ENCODE measurements at regions of chr9 and their contacts with region 1.

Region 1: GRCh38 chr9:92438900-92439526 is 14.7 kb upstream of the OMD start:
- DNase-seq: peak; percentile 9
- H3K4me3 Mint-ChIP-seq: no peak overlapping the region
- H3K27ac Mint-ChIP-seq: peak overlapping the region; percentile 68
- H3K4me1 Mint-ChIP-seq: peaks cover 7% of the 10 kb centered on the region
- H3K27me3 Mint-ChIP-seq: no peaks in the 10 kb centered on the region
- CTCF ChIP-seq: peak; percentile 50

Region 2: DNA sequence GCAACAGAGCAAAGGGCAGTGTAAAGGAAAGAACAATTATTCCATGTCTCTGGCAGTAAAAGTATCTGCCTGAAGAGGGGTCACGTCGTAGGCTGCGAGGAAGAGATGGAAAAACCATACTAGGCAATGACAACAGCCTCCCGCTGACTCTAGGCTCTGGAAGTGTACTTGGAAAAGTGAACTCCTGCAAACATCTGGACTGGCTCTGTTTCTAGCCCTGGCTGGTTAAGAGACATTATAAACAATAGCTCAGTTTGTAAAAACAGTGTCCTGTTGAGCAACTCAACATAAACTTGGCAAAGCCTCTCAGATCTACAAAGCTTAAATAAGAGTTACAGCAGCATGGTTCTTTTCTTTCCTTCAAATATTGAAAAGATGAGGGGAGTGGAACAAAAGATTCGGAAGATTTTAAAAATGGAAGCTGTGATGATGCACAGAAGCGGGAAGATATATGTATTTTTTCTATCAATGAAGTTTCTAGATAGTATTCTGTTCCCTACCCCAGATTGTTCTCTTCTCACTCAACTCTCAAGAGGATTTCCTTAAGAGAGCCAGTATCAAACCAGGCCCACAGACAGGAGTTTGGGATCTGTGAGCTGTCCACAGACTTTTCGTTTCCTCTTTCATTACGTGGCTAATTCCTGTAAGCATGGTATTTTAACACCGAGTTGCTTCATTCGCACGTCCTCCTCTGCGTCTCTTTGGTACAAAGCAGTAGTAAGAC is 403.2 kb before region 1 on chr9:
- CTCF ChIA-PET with region 1: no interaction called
- POLR2A ChIA-PET with region 1: no interaction called
- intact Hi-C with region 1: no loop called
- DNase-seq: no peak
- H3K4me3 Mint-ChIP-seq: no peak overlapping the region
- H3K27ac Mint-ChIP-seq: peak overlapping the region; percentile 56
- H3K4me1 Mint-ChIP-seq: no peaks in the 10 kb centered on the region
- H3K27me3 Mint-ChIP-seq: no peaks in the 10 kb centered on the region
- CTCF ChIP-seq: no peak

Region 3: DNA sequence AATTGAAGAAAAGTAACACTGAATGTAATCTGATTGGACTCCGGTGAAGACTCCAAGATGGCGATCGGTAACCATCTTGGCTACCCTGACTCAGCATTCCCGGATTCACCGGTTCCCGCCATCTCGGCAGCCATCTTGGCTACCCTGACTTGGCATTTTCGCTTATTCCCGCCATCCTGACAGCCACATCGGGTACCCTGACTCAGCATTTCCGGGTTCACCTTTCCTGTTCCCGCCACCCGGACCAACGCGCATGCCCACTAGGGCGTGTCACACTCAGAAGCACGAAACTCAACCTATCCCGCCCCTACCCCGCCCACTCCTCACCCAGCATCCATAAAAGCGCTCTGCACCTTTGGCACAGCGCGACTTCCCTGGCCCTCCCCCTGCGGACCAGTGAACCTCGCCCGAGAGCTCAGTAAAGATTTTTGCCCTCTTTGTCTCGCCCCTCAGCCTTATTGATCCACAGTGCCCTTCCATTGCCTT is 341.0 kb before region 1 on chr9:
- CTCF ChIA-PET with region 1: no interaction called
- POLR2A ChIA-PET with region 1: no interaction called
- intact Hi-C with region 1: no loop called
- DNase-seq: peak; percentile 89
- H3K4me3 Mint-ChIP-seq: peak overlapping the region; percentile 24
- H3K27ac Mint-ChIP-seq: no peak overlapping the region
- H3K4me1 Mint-ChIP-seq: peaks cover 26% of the 10 kb centered on the region
- H3K27me3 Mint-ChIP-seq: no peaks in the 10 kb centered on the region
- CTCF ChIP-seq: no peak

Region 4: DNA sequence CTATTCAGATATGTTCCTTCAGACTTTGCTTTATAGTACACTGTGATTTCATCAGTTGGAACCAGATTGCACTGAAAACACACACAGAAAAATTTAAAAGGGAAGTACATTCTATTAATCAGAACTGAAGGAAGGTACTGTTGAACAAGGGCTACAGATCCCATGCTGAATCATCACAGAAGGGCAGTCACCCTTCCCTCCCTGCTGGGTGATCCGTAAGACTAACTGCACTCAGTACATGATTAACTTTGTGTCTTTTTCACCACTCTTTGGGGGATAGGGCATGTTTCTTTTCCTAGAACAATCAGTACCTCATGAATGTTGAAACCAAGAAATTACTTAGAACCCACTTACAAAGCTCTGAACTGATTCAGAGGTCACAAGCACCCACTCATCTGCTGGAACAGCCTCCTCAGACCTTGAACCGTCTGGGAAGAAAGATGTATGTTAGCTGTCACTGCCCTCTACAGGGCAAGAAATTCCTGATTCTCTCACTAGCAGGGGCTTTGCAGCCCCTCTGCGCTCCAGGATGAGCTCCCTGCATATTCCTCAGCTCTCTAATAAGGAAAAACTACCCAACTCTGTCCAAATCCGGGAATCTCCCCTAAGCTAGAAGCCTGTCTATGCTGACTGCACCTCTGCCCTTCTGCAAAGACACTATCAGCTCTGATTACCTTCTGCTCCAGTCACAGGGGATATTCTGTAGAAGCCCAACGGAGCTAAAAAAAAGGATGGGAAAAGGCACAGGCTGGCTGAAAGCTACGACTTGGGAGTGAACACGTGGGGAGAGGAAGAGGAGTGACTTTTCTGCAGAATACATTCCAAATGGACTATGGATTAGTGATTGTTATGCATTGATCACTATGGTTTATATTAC is 196.5 kb before region 1 on chr9:
- CTCF ChIA-PET with region 1: interaction called, 4 read pairs
- POLR2A ChIA-PET with region 1: no interaction called
- intact Hi-C with region 1: loop called (anchors 5 kb)
- DNase-seq: no peak
- H3K4me3 Mint-ChIP-seq: no peak overlapping the region
- H3K27ac Mint-ChIP-seq: peak overlapping the region; percentile 47
- H3K4me1 Mint-ChIP-seq: peaks cover 23% of the 10 kb centered on the region
- H3K27me3 Mint-ChIP-seq: no peaks in the 10 kb centered on the region
- CTCF ChIP-seq: peak; percentile 14

Region 5: DNA sequence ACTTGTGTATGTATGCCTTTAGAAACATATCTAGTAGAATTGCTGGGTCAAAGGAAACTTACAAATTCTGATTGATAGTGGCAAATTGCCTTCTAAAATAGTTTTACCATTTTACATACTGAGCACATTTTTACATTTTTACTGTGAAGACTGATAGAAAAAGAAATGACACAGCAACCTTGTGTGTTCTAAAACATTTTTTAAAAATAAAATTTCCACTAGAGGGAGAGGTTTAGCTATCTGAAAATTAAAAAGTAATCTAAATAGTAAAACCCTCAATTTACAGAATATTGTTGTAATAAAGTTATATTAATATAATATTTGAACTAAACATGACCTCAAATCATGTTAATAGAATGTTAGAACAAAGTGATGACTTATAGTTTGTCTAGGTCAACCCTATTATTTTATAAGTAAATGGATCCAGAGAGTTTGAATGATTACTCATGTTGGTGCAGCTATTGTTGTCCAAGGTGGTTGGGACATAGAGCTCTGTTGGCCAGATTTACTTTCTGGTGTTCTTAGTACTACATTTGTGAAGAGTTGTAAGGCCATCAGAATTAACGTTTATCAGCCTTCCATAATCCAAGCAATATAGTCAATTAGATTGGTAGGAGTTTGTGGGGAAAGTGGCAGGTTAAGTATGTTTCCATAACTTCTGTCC is 96.1 kb before region 1 on chr9:
- CTCF ChIA-PET with region 1: interaction called, 5 read pairs
- POLR2A ChIA-PET with region 1: interaction called, 3 read pairs
- intact Hi-C with region 1: loop called (anchors 2 kb)
- DNase-seq: no peak
- H3K4me3 Mint-ChIP-seq: no peak overlapping the region
- H3K27ac Mint-ChIP-seq: peak overlapping the region; percentile 48
- H3K4me1 Mint-ChIP-seq: no peaks in the 10 kb centered on the region
- H3K27me3 Mint-ChIP-seq: no peaks in the 10 kb centered on the region
- CTCF ChIP-seq: peak; percentile 32

Region 6: GRCh38 chr9:92763721-92764380 is 324.8 kb after region 1 on chr9:
- CTCF ChIA-PET with region 1: no interaction called
- POLR2A ChIA-PET with region 1: no interaction called
- intact Hi-C with region 1: no loop called
- DNase-seq: no peak
- H3K4me3 Mint-ChIP-seq: peak overlapping the region; percentile 85
- H3K27ac Mint-ChIP-seq: peak overlapping the region; percentile 84
- H3K4me1 Mint-ChIP-seq: peaks cover 49% of the 10 kb centered on the region
- H3K27me3 Mint-ChIP-seq: no peaks in the 10 kb centered on the region
- CTCF ChIP-seq: no peak

Measured in MCF 10A (cell line).